ENCODE measurements at regions of chr2 and their contacts with region 1.

Region 1: GRCh38 chr2:240143801-240144648 is 3.6 kb upstream of the OTOS start:
- DNase-seq: peak; percentile 68 to 87
- ATAC-seq: peak; percentile 88 to 96 (median 94)
- H3K4me3 ChIP-seq: no peak overlapping the region
- H3K27ac ChIP-seq: no peak overlapping the region
- H3K4me1 ChIP-seq: no peaks in the 10 kb centered on the region
- H3K27me3 ChIP-seq: no peaks in the 10 kb centered on the region
- CTCF ChIP-seq: peak; percentile 98

Region 2: DNA sequence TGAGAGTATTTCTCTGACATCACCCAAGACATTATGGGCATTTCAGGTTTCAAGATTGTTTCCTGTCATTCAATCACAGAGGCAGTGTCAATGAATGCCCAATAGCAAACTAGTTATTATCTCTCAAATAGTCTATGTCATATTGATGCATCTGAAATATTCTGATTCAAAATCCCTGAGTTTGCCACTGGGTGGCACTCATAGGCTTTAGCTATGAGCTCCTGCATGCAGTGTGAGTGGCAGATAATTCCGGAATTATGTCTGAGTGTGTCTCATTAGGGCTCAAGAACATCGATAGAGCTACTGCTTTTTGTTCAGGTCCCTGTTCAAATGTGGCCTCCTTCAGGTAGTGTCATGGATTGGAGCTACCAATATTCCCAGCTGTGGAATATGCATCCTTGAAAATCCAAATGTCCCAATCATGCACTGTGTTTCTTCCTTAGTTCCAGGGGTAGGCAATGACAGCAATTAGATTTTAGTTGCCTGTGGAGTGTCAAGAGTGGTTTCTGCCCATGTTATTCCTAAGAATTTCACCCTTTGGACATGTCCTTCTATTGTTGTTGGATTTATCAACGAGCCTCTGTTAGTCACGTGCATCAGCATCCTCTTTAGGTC is 82.9 kb before region 1 on chr2:
- intact Hi-C with region 1: loop called (anchors 1 to 2 kb)
- DNase-seq: no peak
- ATAC-seq: peak; percentile 67 to 81 (median 72)
- H3K4me3 ChIP-seq: no peak overlapping the region
- H3K27ac ChIP-seq: no peak overlapping the region
- H3K4me1 ChIP-seq: no peaks in the 10 kb centered on the region
- H3K27me3 ChIP-seq: peaks cover 2 to 16% (median 2%) of the 10 kb centered on the region in 3 donors
- CTCF ChIP-seq: peak; percentile 76

Measured in psoas muscle (tissue), 8 donors.